SK-N-SH (cell line): ENCODE measurements at regions of chr5 and their contacts with region 1.

Region 1: DNA sequence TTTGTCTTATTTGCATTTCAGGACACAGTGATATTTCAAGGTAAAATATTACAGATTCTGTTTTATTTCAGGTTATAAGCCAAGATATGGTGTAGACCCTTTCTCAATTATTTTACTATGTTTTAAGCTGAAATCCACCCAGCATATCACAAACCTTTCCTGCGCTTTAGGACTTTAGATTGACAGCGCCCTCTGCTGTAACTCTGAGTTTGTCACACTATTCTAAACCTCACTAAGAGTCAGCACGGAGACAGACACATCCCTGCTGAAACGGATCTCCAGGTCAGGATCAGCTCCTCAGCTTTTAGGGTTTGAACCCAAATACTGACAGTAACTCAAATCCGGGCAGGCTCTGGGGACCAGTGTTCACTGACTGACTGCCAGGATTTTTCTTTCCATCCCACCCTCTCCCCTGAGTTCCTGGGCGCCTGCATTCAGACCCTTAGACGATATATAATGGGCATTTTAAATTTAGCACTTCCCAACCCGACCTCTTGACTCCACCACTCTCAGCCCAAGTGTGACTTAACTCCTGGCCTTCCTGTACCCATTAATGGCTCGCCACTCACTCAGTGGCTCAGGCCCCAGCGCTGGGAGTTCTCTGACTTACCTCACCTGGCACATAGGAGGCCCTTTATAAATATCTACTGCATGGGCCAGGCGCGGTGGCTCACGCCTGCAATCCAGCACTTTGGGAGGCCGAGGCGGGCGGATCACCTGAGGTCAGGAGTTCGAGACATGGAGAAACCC is 33.5 kb downstream of the TLX3 start:
- DNase-seq: peak; percentile 73
- H3K4me3 ChIP-seq: no peak overlapping the region; a peak in 1 of 4 replicates
- H3K27ac ChIP-seq: no peak overlapping the region
- H3K4me1 ChIP-seq: peaks cover 0 to 2% of the 10 kb centered on the region in 2 experiments; a peak in 1 of 4 replicates
- H3K27me3 ChIP-seq: no peaks in the 10 kb centered on the region
- CTCF ChIP-seq: peak; percentile 84
- EP300 ChIP-seq: no peak
- RAD21 ChIP-seq: peak; percentile 96

Region 2: DNA sequence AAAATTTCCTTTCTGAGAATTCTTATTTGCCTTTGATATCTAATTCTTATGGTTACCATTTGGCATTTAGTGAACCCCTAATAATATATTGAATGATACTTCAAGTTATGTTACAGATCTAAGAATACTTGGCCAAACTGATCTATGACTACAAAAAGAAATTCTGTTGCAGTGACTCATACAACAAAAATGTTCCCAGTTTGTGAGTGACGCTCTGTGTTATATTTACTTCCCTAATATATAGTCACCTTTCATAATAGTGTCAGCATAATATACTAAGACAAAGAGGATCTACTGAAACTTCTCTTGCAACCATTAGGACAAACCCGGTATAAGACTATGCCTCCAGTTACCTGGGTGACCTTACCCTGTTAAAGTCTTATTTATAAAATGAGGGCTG is 250.3 kb before region 1 on chr5:
- CTCF ChIA-PET with region 1: interaction called, 10 read pairs
- POLR2A ChIA-PET with region 1: no interaction called
- DNase-seq: no peak
- H3K4me3 ChIP-seq: no peak overlapping the region
- H3K27ac ChIP-seq: peak overlapping the region in 1 of 2 experiments; percentile 89; a peak in 2 of 4 replicates
- H3K4me1 ChIP-seq: peaks cover 0 to 19% of the 10 kb centered on the region in 2 experiments; a peak in 2 of 4 replicates
- H3K27me3 ChIP-seq: no peaks in the 10 kb centered on the region
- CTCF ChIP-seq: no peak
- EP300 ChIP-seq: no peak
- RAD21 ChIP-seq: no peak

Region 3: DNA sequence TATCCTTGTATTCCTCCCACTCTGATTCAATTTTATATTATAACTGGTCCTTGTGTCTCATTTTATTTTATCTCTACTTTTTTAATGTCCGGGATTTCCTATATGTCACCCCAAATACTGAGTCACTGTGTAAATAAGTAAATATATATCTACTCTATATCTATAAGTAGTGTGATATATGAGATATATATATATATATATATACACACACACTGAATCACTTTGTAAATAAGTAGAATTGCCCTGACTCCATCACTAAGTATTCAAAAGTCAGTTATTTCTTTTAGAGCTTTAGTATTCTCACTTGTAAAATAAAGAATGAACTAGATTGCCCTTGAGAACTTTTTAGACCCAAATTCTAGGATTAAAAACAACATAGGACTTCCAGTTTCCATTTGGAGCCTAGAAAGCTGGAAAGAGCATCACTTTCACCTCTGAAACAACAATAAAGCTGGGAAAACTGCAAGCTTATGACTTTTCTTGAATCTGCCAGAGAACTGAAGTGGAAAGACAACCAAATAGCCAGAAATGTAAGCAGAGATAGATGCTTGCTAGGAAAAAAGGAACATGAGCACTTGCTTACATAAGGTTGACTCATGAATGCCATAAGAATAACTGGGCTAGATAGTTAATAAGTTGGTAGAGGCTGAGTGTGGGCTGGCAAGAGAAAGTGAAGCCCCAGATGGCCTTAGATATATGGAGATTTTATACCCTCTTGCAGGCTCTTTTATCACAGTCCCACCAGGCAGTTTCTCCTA is 204.6 kb before region 1 on chr5:
- CTCF ChIA-PET with region 1: no interaction called
- POLR2A ChIA-PET with region 1: no interaction called
- DNase-seq: no peak
- H3K4me3 ChIP-seq: no peak overlapping the region
- H3K27ac ChIP-seq: peak overlapping the region in 1 of 2 experiments; percentile 80; a peak in 2 of 4 replicates
- H3K4me1 ChIP-seq: peaks cover 0 to 4% of the 10 kb centered on the region in 2 experiments; a peak in 1 of 4 replicates
- H3K27me3 ChIP-seq: no peaks in the 10 kb centered on the region
- CTCF ChIP-seq: no peak
- EP300 ChIP-seq: no peak
- RAD21 ChIP-seq: no peak

Region 4: GRCh38 chr5:171261361-171261760 is 81.2 kb before region 1 on chr5:
- CTCF ChIA-PET with region 1: interaction called, 12 read pairs
- POLR2A ChIA-PET with region 1: no interaction called
- DNase-seq: no peak
- H3K4me3 ChIP-seq: no peak overlapping the region
- H3K27ac ChIP-seq: no peak overlapping the region
- H3K4me1 ChIP-seq: no peaks in the 10 kb centered on the region
- H3K27me3 ChIP-seq: no peaks in the 10 kb centered on the region
- CTCF ChIP-seq: no peak
- EP300 ChIP-seq: no peak
- RAD21 ChIP-seq: no peak

Region 5: DNA sequence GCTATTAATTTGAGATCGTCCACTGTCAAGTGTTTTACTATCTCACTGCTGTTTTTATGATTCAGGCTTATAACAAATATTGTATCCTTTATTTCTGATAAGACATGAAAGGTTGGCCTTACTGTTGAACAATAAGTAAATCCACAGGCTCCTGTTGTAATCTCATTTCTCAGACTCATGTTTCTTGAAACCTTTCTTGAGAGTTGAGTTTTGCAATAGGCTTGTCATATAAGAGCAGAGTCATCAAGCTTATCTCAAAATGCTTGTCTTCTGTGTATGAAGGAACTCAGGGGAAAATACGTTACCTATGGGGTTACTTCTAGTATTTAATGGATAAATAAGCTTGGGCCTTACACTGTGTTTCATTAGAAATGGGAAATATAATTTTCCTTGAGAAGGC is 42.7 kb before region 1 on chr5:
- CTCF ChIA-PET with region 1: interaction called, 11 read pairs
- POLR2A ChIA-PET with region 1: no interaction called
- DNase-seq: no peak
- H3K4me3 ChIP-seq: no peak overlapping the region
- H3K27ac ChIP-seq: peak overlapping the region in 1 of 2 experiments; percentile 72; a peak in 2 of 4 replicates
- H3K4me1 ChIP-seq: peaks cover 17 to 54% of the 10 kb centered on the region in 2 experiments
- H3K27me3 ChIP-seq: no peaks in the 10 kb centered on the region
- CTCF ChIP-seq: no peak
- EP300 ChIP-seq: no peak
- RAD21 ChIP-seq: no peak

Region 6: DNA sequence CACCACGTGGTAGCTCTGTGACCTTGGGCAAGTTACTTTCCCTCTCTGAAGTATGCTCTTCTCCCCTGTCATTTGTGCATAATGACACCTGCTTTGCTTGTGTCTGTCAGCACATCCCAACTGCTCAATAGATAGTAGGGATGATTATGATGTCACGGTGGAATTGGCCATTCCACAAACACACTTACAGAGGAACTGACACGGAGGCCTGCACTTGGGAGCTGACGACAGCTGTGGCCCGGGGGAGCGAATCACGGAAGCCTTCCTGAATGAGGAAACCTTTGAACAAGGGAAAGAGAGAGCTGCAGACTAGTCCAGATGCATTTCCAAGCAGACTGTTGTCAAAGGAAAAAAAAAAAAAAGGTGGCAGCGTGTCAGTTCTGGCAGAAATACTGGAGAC is 12.5 kb before region 1 on chr5:
- CTCF ChIA-PET with region 1: interaction called, 13 read pairs
- POLR2A ChIA-PET with region 1: no interaction called
- DNase-seq: no peak
- H3K4me3 ChIP-seq: no peak overlapping the region
- H3K27ac ChIP-seq: no peak overlapping the region
- H3K4me1 ChIP-seq: no peaks in the 10 kb centered on the region; a peak in 1 of 4 replicates
- H3K27me3 ChIP-seq: no peaks in the 10 kb centered on the region
- CTCF ChIP-seq: no peak
- EP300 ChIP-seq: no peak
- RAD21 ChIP-seq: no peak

Region 7: DNA sequence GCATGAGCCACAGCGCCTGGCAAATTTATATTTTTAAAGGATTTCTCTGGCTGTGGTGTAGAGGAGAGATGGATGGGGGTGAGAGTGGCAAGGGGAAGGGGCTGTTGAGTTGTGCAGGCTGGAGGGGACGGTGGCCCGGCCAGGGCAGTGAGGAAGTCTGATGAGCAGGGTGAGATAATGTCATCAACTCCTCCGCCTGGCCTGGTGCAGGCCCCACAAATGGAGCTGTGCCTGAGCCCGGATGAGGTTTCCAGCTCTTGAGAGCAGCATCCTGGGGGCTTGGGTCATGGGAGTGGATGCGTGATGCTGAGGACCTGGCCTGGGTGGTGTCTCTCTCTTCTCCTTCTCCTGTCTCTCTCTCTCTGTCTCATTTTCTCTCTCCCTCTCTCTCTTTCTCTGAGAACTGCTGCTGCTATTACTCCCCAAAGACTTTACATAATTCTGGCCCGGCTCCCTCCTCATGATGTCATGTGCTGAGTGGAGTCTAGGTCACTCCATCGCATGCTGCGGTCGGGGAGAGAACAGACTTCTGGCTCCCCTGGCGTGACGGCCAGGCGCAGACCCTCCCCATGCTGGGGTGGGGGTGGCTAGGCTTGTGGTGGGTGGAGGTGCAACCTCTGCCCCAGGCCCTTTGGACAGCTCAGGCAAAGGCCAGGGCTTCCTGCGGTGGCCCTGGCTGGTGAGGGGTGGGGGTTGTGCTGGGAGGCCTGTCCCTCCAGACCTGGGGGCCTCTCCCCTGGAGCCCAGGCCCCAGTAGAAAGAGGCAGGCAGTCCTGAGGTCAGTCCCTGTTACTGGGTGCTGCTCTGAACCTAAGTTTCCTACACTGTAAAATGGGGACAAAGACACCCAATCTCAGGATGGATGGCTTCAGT is 103.3 kb after region 1 on chr5:
- CTCF ChIA-PET with region 1: no interaction called
- POLR2A ChIA-PET with region 1: no interaction called
- DNase-seq: no peak
- H3K4me3 ChIP-seq: no peak overlapping the region
- H3K27ac ChIP-seq: no peak overlapping the region
- H3K4me1 ChIP-seq: no peaks in the 10 kb centered on the region; a peak in 1 of 4 replicates
- H3K27me3 ChIP-seq: no peaks in the 10 kb centered on the region
- CTCF ChIP-seq: no peak
- EP300 ChIP-seq: no peak
- RAD21 ChIP-seq: no peak